Activated CD4-positive, alpha-beta T cell treated with anti-CD3 and anti-CD28 coated beads for 36 hours (primary cell): ENCODE measurements at regions of chr21 and their contacts with region 1.

Region 1: GRCh38 chr21:42593007-42593806 is 60.2 kb upstream of the PDE9A start:
- DNase-seq: peak; percentile 87
- ATAC-seq: peak; percentile 96
- H3K4me3 Mint-ChIP-seq: no peak overlapping the region
- H3K27ac Mint-ChIP-seq: no peak overlapping the region
- H3K4me1 Mint-ChIP-seq: peaks cover 18% of the 10 kb centered on the region
- H3K27me3 Mint-ChIP-seq: peaks cover 2% of the 10 kb centered on the region

Region 2: DNA sequence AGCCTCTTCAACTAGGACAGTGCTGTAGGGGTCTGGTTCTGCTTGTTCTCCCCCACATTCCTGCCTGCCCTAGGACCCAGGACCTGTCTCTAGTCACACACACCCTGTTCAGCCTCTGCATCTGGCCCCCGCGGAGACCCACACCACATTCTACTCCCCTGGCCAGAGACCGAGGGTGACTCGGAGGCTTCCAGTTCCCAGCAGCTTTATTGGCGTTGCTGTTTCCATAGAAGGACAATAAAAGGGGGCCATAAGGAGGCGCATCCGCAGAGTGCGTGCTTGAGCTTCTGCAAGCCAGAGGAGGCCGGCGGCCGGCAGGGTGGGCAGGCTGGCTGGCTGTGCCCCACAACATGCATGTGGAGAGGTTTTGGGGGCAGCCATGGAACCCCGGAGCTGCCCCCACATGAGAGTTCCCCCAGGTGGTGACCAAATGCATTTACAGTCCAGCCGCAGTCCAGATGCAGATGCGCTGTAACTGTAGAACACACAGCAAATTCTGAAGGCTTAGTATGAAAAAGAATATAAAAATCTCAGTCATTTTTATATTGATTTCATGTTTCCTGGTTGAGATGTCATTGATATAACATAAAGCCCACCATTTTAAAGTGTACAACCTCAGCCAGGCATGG is 112.7 kb after region 1 on chr21:
- CTCF ChIA-PET with region 1: interaction called, 3 read pairs
- POLR2A ChIA-PET with region 1: no interaction called
- intact Hi-C with region 1: loop called in 1 of 2 experiments (anchors 5 kb)
- DNase-seq: no peak
- ATAC-seq: no peak
- H3K4me3 Mint-ChIP-seq: no peak overlapping the region
- H3K27ac Mint-ChIP-seq: no peak overlapping the region
- H3K4me1 Mint-ChIP-seq: no peaks in the 10 kb centered on the region
- H3K27me3 Mint-ChIP-seq: no peaks in the 10 kb centered on the region

Region 3: GRCh38 chr21:42811960-42812359 is 218.8 kb after region 1 on chr21:
- CTCF ChIA-PET with region 1: interaction called, 41 read pairs
- POLR2A ChIA-PET with region 1: no interaction called
- intact Hi-C with region 1: no loop called
- DNase-seq: no peak
- ATAC-seq: no peak
- H3K4me3 Mint-ChIP-seq: no peak overlapping the region
- H3K27ac Mint-ChIP-seq: no peak overlapping the region
- H3K4me1 Mint-ChIP-seq: no peaks in the 10 kb centered on the region
- H3K27me3 Mint-ChIP-seq: no peaks in the 10 kb centered on the region

Region 4: DNA sequence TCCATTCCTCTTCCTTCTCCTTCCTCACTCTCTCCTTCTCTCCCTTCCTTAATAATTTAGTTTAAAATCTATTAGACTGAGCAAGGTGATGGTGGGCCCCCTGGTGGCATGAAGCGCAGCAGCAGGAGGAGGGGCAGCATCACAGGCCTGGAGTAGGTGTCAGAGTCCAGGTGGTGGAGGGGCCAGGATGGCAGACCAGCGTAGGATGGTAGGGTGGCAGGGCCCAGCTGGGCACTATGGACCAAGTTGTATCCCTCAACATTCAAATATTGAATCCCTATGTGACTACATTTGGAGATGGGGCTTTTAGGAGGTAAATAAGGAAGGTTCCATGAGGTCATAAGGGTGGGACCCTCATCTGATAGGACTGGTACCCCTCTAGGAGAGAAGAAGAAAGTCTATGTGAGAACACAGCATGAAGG is 225.1 kb after region 1 on chr21:
- CTCF ChIA-PET with region 1: interaction called, 41 read pairs
- POLR2A ChIA-PET with region 1: no interaction called
- intact Hi-C with region 1: loop called (anchors 1 to 2 kb)
- DNase-seq: peak; percentile 82
- ATAC-seq: peak; percentile 89
- H3K4me3 Mint-ChIP-seq: no peak overlapping the region
- H3K27ac Mint-ChIP-seq: no peak overlapping the region
- H3K4me1 Mint-ChIP-seq: no peaks in the 10 kb centered on the region
- H3K27me3 Mint-ChIP-seq: no peaks in the 10 kb centered on the region